Gastrocnemius medialis (tissue), 4 donors: ENCODE measurements at regions of chr12 and their contacts with region 1.

Region 1: DNA sequence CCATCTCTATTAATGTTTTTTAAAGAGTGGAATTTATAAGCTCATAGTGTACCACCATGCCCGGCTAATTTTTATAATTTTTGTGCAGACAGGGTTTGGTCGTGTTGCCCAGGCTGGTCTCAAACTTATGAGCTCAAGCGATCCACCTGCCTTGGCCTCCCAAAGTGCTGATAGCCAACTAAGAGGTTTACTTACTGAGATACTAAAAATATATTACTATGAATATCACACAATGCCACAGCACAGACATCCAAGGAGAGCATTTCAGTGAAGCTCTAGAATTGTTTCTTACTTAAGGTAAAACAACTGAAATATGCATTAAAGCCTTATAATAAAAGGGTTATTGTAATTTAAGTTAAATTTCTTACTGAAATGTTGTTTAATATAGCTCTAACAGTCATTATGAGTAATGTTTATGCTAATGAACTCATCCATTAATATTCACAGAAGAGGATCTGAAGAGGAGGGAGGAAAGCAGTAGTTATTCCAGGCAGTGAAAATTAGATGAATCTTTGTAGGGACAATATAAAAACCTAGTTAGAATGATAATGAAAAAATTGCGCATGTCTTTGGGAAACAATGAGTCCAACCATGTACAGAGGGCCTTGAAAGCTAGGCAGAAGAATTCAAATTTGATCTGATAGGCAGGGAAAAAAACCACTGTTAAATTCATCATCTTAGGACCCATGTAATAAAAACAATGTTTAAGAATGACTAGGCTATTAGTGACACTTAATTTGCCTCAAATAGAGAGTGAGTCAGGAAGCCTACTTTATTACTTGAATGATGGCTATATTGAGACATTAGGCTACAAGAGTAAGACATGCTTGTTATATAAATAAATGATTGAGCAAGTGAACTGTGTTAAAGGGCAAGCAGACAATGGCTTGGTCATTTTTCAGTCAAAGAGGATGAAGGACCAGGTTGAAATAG is 99.2 kb downstream of the SLC41A2 start:
- DNase-seq: no peak
- ATAC-seq: peak; percentile 93 to 96
- H3K4me3 ChIP-seq: no peak overlapping the region
- H3K27ac ChIP-seq: peak overlapping the region; percentile 52 to 65 (median 58)
- H3K4me1 ChIP-seq: peaks cover 0 to 5% of the 10 kb centered on the region in 2 donors
- H3K27me3 ChIP-seq: no peaks in the 10 kb centered on the region
- CTCF ChIP-seq: no peak
- POLR2A ChIP-seq: no peak

Region 2: GRCh38 chr12:104790296-104791125 is 68.4 kb before region 1 on chr12:
- in situ Hi-C with region 1: no loop called
- intact Hi-C with region 1: loop called (anchors 5 kb)
- DNase-seq: no peak
- ATAC-seq: no peak
- H3K4me3 ChIP-seq: no peak overlapping the region
- H3K27ac ChIP-seq: no peak overlapping the region
- H3K4me1 ChIP-seq: peaks cover 3 to 7% of the 10 kb centered on the region in 2 donors
- H3K27me3 ChIP-seq: no peaks in the 10 kb centered on the region
- CTCF ChIP-seq: peak in 2 of 5 experiments; percentile 15 to 29
- POLR2A ChIP-seq: no peak

Region 3: GRCh38 chr12:105013892-105014291 is 155.0 kb after region 1 on chr12:
- in situ Hi-C with region 1: no loop called
- intact Hi-C with region 1: no loop called
- DNase-seq: no peak
- ATAC-seq: no peak
- H3K4me3 ChIP-seq: no peak overlapping the region
- H3K27ac ChIP-seq: no peak overlapping the region
- H3K4me1 ChIP-seq: peaks cover 5% of the 10 kb centered on the region in 2 donors
- H3K27me3 ChIP-seq: no peaks in the 10 kb centered on the region
- CTCF ChIP-seq: no peak
- POLR2A ChIP-seq: no peak